PC-9 (cell line): ENCODE measurements at regions of chr19 and their contacts with region 1.

Region 1: GRCh38 chr19:50952910-50953309 is at the start of gene KLK5:
- DNase-seq: peak; percentile 86 to 87
- H3K4me3 ChIP-seq: peak within 1 kb of the TSS; percentile 68
- H3K27ac ChIP-seq: peak within 1 kb of the TSS; percentile 55
- H3K4me1 ChIP-seq: peaks cover 13% of the 10 kb centered on the region
- H3K27me3 ChIP-seq: no peaks in the 10 kb centered on the region
- CTCF ChIP-seq: no peak
- total RNA-seq, gene KLK5: 405 and 412 TPM in 2 replicates

Region 2: DNA sequence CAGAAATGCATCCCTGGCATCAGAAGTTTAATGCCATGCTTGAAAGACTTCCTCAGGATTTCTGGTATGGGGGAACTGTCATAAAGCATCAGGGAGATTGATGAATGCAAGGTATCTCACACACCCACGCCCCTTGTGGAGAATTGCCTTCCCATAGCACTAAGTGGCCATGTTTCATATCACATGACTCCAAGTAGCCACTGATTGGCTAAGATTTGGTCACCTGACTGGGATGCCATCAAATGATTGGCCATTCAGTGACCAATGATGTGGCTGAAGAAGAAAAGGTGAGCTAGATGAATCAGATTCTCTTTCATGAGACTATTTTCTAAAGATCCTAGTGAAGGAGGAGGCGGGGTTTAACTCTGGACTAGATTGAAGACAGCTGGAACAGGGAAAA is 41.2 kb after region 1 on chr19:
- CTCF ChIA-PET with region 1: no interaction called
- POLR2A ChIA-PET with region 1: interaction called, 12 read pairs
- intact Hi-C with region 1: no loop called
- DNase-seq: peak in 1 of 2 experiments; percentile 62
- H3K4me3 ChIP-seq: no peak overlapping the region
- H3K27ac ChIP-seq: peak overlapping the region; percentile 99
- H3K4me1 ChIP-seq: peaks cover 37% of the 10 kb centered on the region
- H3K27me3 ChIP-seq: no peaks in the 10 kb centered on the region
- CTCF ChIP-seq: no peak

Region 3: DNA sequence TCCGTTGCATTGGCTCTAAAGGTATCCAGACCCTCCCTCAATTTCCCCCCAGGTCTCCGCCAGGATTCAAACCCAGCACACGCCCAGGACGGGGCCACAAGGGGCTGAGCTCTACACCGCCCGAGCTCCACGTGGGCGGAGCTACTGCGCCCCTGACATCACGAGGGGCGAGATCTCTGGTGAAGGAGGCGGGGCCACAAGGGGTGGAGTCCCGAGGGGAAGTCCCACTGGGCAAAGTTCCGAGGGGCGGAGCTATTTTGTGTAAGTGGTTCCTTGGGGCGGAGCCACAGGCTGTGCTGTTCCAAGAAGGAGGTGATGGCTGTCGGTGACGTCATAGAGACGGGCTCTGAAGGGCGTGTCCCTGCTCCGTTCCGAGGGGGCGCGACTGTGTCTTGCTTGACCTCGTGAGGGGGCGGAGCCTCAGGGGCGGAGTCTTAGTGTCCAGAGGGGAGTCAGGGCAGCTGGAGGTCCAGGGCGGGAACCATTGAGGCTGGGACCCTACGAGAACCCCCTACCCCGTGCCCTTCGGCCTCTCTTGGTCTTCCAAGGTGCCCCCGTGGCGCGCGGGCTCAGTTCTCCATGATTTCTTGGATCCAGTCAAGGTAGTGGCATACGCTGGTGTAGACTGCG is 49.7 kb after region 1 on chr19:
- CTCF ChIA-PET with region 1: no interaction called
- POLR2A ChIA-PET with region 1: interaction called, 13 read pairs
- intact Hi-C with region 1: loop called (anchors 1 kb)
- DNase-seq: peak; percentile 94 to 98
- H3K4me3 ChIP-seq: peak overlapping the region; percentile 64
- H3K27ac ChIP-seq: peak overlapping the region; percentile 66
- H3K4me1 ChIP-seq: peaks cover 8% of the 10 kb centered on the region
- H3K27me3 ChIP-seq: no peaks in the 10 kb centered on the region
- CTCF ChIP-seq: no peak